SK-N-SH (cell line): ENCODE measurements at regions of chr1 and their contacts with region 1.

Region 1: GRCh38 chr1:228734881-228735801 is at the start of gene RHOU:
- DNase-seq: peak; percentile 95
- H3K4me3 ChIP-seq: peak within 1 kb of the TSS; percentile 74 to 76
- H3K27ac ChIP-seq: peak within 1 kb of the TSS in 1 of 2 experiments; percentile 77; a peak in 2 of 4 replicates
- H3K4me1 ChIP-seq: peaks cover 0 to 14% of the 10 kb centered on the region in 2 experiments; a peak in 2 of 4 replicates
- H3K27me3 ChIP-seq: peaks cover 8% of the 10 kb centered on the region; the same call in 1 of the 2 replicates
- CTCF ChIP-seq: peak; percentile 54
- EP300 ChIP-seq: no peak
- RAD21 ChIP-seq: peak; percentile 63
- polyA plus RNA-seq, gene RHOU: 0.36 and 0.44 TPM in 2 replicates

Region 2: DNA sequence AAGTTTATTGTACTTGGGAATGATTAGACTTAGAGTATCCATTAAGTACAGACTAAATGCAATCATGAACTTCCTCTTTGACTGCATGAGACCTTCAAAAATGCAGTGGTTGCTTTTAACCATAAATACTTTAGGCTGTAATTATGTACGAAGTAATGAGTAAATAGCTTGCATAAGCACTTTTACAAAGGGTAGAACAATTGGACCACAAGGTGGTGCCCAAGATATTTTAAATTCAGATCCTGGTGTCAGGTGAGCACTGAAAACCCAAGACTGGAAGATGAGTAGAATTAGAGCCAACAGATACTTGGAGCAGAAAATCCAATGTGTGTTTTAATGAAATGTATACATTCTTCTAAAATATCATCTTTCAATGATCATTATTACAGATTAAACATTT is 43.2 kb before region 1 on chr1:
- CTCF ChIA-PET with region 1: interaction called, 11 read pairs
- POLR2A ChIA-PET with region 1: no interaction called
- DNase-seq: peak; percentile 45
- H3K4me3 ChIP-seq: no peak overlapping the region
- H3K27ac ChIP-seq: no peak overlapping the region
- H3K4me1 ChIP-seq: no peaks in the 10 kb centered on the region
- H3K27me3 ChIP-seq: no peaks in the 10 kb centered on the region
- CTCF ChIP-seq: peak; percentile 53
- EP300 ChIP-seq: no peak
- RAD21 ChIP-seq: peak; percentile 79

Region 3: GRCh38 chr1:228860911-228861831 is 126.0 kb after region 1 on chr1:
- CTCF ChIA-PET with region 1: interaction called, 23 read pairs
- POLR2A ChIA-PET with region 1: interaction called, 3 read pairs
- DNase-seq: no peak
- H3K4me3 ChIP-seq: no peak overlapping the region
- H3K27ac ChIP-seq: peak overlapping the region; percentile 6 to 52; a peak in 3 of 4 replicates
- H3K4me1 ChIP-seq: peaks cover 13 to 46% of the 10 kb centered on the region in 2 experiments
- H3K27me3 ChIP-seq: no peaks in the 10 kb centered on the region
- CTCF ChIP-seq: no peak
- EP300 ChIP-seq: peak in 1 of 2 experiments; percentile 95; a peak in 2 of 4 replicates
- RAD21 ChIP-seq: no peak

Region 4: DNA sequence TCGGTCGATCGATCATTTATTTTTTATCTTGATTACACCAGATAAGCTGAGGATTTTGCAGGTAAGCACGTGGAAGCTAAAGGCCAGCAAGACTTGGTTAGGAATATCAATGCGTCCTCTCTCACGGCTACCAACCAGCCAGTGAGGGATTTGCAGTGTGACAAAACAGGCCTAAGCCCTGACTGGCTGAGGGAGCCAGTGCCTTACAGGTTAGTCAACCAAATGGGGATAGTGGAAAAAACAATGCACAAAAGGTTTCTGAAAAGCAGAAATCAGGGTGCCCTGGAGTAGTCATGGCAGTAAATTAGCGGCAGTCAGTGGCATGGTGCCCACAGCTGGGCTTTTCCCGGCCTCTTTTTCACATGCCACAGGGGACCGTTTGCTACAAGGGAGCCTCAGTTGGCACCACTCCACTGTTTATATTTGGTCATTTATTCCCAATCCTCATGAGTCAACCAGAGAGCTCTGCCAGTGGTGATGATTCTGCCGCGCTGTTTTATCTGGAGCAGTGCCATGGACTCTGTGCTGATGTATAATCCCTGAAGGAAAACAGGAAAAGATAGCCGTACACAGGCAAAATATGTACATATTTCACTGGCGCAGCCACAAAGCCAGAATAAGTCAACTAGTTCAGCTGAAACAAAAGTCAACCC is 167.8 kb after region 1 on chr1:
- CTCF ChIA-PET with region 1: interaction called, 24 read pairs
- POLR2A ChIA-PET with region 1: interaction called, 4 read pairs
- DNase-seq: peak; percentile 70
- H3K4me3 ChIP-seq: no peak overlapping the region
- H3K27ac ChIP-seq: peak overlapping the region; percentile 49 to 77; a peak in 3 of 4 replicates
- H3K4me1 ChIP-seq: peaks cover 4 to 46% of the 10 kb centered on the region in 2 experiments; a peak in 2 of 4 replicates
- H3K27me3 ChIP-seq: peaks cover 7% of the 10 kb centered on the region; the same call in 1 of the 2 replicates
- CTCF ChIP-seq: no peak
- EP300 ChIP-seq: peak; percentile 80 to 92
- RAD21 ChIP-seq: no peak; the same call in none of the 2 replicates

Region 5: DNA sequence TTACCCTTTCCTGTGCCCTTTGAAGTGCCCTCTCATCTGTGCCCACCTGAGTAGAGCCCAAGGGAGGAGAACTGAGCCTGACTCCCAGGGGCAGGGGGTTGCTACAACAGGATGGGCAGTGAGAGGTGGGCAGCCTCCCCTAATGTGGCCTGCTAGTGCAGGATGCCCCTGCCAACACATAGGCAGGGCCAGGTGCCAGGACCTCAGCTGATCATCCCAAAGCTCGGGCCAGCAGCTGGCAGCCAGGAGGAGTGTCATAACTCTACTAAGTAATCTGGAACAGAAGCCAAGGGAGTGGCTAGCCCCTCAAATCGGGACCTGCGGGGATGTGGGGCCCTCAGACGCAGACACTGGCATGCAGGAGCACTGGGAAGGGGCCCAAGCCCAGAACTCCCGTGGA is 327.0 kb after region 1 on chr1:
- CTCF ChIA-PET with region 1: interaction called, 10 read pairs
- POLR2A ChIA-PET with region 1: no interaction called
- DNase-seq: no peak
- H3K4me3 ChIP-seq: no peak overlapping the region
- H3K27ac ChIP-seq: no peak overlapping the region
- H3K4me1 ChIP-seq: peaks cover 10 to 42% of the 10 kb centered on the region in 2 experiments; a peak in 3 of 4 replicates
- H3K27me3 ChIP-seq: no peaks in the 10 kb centered on the region
- CTCF ChIP-seq: no peak
- EP300 ChIP-seq: no peak
- RAD21 ChIP-seq: no peak

Region 6: GRCh38 chr1:229227298-229227919 is 492.3 kb after region 1 on chr1:
- CTCF ChIA-PET with region 1: interaction called, 61 read pairs
- POLR2A ChIA-PET with region 1: interaction called, 3 read pairs
- DNase-seq: peak; percentile 87
- H3K4me3 ChIP-seq: peak overlapping the region in 1 of 2 experiments; percentile 38; a peak in 1 of 4 replicates
- H3K27ac ChIP-seq: no peak overlapping the region
- H3K4me1 ChIP-seq: peaks cover 6 to 7% of the 10 kb centered on the region in 2 experiments; a peak in 3 of 4 replicates
- H3K27me3 ChIP-seq: peaks cover 6% of the 10 kb centered on the region; the same call in 1 of the 2 replicates
- CTCF ChIP-seq: peak; percentile 95
- EP300 ChIP-seq: no peak
- RAD21 ChIP-seq: peak; percentile 95

Region 7: GRCh38 chr1:229326601-229327000 is 591.5 kb after region 1 on chr1:
- CTCF ChIA-PET with region 1: no interaction called
- POLR2A ChIA-PET with region 1: no interaction called
- DNase-seq: no peak
- H3K4me3 ChIP-seq: no peak overlapping the region
- H3K27ac ChIP-seq: no peak overlapping the region
- H3K4me1 ChIP-seq: peaks cover 0 to 18% of the 10 kb centered on the region in 2 experiments; a peak in 2 of 4 replicates
- H3K27me3 ChIP-seq: no peaks in the 10 kb centered on the region
- CTCF ChIP-seq: no peak
- EP300 ChIP-seq: no peak
- RAD21 ChIP-seq: no peak